ENCODE measurements at regions of chr5 and their contacts with region 1.

Region 1: DNA sequence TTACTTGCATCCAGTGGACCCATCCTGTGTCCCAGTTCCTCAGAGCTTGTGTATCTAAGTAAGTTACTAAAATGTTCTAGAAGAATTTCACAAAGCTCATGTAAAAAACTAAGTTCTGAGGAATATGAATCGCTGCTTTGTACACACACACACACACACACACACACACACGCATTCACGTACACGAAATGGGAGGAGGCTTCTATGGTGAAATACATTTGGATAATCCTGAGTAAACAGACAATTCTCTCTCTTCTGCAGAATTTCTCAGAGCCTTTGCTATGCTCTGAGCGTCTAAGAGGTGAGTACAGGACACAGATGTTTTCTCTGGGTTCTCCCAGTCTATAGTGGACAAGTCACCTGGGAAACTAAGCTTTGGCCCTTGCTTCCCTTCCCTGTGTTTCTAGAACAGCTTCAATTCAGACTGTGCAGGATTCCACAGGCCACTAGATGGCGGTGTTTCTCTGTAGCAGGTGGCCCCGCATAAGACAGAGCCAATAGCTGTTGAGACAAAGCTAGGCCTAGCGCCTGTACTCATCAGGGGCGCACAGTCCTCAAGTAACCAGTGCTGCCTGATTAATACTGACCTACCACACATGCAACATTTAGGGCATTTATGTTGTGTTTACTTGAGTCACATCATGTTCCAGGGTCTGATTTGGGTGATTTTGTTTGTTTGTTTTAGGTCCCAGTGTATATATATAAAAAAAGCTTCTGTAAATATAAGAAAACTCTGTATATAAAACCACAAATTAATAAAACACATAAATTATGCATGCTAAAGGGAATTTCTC is 114.8 kb downstream of the LIFR start:
- DNase-seq: peak; percentile 92
- H3K4me3 Mint-ChIP-seq: no peak overlapping the region
- H3K27ac Mint-ChIP-seq: no peak overlapping the region
- H3K4me1 Mint-ChIP-seq: no peaks in the 10 kb centered on the region
- H3K27me3 Mint-ChIP-seq: peaks cover 40% of the 10 kb centered on the region

Region 2: GRCh38 chr5:38420691-38421390 is 20.8 kb before region 1 on chr5:
- CTCF ChIA-PET with region 1: interaction called, 20 read pairs
- intact Hi-C with region 1: no loop called
- DNase-seq: peak; percentile 65
- H3K4me3 Mint-ChIP-seq: no peak overlapping the region
- H3K27ac Mint-ChIP-seq: no peak overlapping the region
- H3K4me1 Mint-ChIP-seq: no peaks in the 10 kb centered on the region
- H3K27me3 Mint-ChIP-seq: peaks cover 16% of the 10 kb centered on the region

Region 3: DNA sequence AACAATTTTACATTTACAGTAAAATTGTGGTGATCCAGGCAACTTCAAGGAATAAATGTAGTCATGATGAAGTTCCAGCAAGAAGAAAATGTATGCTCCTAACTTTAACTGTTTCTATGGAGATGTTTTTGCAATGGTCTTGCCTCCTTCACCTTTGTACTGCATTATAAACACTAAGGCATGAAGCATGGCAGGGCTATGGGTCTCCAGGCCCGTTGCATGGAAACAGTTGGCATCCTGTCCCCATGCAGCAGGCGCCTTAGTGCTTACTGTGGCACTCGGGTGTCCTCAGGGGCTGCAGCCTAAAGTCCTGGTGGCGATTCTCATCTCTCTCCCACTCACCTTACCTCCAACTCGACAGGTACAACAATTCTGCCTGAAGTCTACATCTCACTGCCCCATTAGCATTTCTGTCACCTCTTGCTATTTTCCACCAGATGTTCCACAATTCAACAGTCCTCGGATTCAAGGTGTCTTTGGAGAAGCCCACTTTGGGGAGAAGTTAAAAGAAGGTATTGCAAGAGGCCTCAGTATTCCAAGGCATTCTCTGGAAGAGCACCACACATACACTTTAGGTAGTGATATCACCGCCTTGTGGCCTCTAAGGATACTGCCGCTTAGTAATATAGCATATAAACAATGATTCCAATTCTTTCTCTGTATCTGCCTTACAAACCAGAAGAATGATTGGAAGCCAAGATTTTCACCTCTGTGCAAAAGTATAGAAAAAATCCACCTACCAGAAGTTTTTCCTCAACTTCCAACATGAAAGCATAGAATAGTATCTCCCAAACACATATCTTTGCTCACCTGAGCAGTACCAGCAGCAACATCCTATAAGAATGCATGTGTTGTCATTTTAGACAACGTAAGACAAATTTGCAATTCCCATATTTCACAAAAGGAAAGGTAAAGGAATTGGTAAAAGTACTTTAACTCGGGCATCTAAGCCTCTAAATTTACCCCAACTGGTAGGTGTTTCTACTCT is 109.7 kb after region 1 on chr5:
- CTCF ChIA-PET with region 1: interaction called, 14 read pairs
- intact Hi-C with region 1: loop called (anchors 1 kb)
- DNase-seq: peak; percentile 12
- H3K4me3 Mint-ChIP-seq: no peak overlapping the region
- H3K27ac Mint-ChIP-seq: no peak overlapping the region
- H3K4me1 Mint-ChIP-seq: peaks cover 4% of the 10 kb centered on the region
- H3K27me3 Mint-ChIP-seq: peaks cover 33% of the 10 kb centered on the region

Region 4: DNA sequence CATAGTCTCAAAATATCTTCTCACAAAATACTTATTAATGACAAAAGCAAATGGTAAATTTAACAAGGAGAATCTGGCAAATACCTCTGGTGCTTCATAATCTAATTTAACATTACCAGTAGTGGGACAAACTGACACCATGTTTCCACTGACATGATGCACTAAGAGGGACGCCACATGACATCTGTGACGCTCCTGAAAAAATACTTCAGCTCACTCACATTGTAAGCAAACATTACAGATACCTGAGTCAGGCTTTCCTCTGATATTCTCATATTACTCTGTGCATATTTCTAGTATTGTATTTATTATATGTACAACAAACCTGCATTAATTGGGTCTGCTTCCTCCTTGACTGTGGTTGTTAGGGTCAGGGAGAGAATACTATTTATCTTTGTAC is 347.5 kb after region 1 on chr5:
- CTCF ChIA-PET with region 1: no interaction called
- intact Hi-C with region 1: no loop called
- DNase-seq: no peak
- H3K4me3 Mint-ChIP-seq: no peak overlapping the region
- H3K27ac Mint-ChIP-seq: no peak overlapping the region
- H3K4me1 Mint-ChIP-seq: no peaks in the 10 kb centered on the region
- H3K27me3 Mint-ChIP-seq: peaks cover 18% of the 10 kb centered on the region

Region 5: DNA sequence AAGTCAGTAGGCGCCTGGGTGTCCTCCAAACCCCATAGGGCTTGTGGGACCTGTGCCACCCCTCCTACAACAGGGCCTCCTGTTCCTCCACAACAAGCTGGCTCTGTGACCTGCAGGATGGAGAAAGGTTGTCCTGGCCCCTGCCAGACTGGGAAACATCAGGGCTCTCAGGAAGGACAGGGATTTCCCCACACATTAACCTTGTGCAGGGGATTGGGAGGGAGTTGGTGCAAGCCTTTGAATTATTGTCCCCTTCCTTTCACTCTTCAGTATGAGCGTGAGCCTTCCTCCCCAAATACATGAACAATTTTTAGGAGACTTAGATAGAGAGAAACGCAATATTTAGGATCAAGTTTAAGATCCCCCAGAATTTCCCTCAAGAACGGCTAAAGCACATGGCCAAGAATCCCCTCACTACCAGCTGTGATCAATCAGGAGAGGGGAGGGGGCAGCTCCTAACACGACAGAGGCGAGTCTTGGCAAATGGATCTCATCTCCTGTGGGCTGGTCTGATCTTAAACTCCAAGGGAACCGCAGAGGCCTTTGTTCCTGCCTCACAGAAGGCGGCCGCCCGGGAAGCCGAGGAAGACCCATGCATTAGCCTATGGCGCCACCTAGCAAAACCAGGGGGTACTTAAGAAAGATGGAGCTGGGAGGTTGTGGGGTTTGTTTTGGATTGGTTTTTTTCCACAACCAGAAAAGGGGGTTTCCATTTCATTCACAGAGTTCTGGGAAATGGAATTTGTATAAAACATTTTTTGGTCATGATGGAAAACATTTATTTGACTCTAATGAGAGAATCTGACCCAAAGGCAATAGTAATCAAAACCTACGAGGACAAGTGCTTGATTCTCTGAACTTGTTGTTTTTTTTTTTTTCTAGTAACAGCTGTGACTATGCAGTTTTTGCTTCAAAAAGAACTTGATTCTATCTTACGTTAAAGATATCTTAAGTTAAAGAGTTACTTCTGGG is 368.0 kb after region 1 on chr5:
- CTCF ChIA-PET with region 1: interaction called, 122 read pairs
- intact Hi-C with region 1: loop called (anchors 1 kb)
- DNase-seq: peak; percentile 78
- H3K4me3 Mint-ChIP-seq: no peak overlapping the region
- H3K27ac Mint-ChIP-seq: no peak overlapping the region
- H3K4me1 Mint-ChIP-seq: peaks cover 12% of the 10 kb centered on the region
- H3K27me3 Mint-ChIP-seq: peaks cover 30% of the 10 kb centered on the region

Region 6: GRCh38 chr5:39080597-39081204 is 639.1 kb after region 1 on chr5:
- CTCF ChIA-PET with region 1: interaction called, 3 read pairs
- intact Hi-C with region 1: loop called (anchors 1 kb)
- DNase-seq: peak; percentile 50
- H3K4me3 Mint-ChIP-seq: no peak overlapping the region
- H3K27ac Mint-ChIP-seq: no peak overlapping the region
- H3K4me1 Mint-ChIP-seq: peaks cover 24% of the 10 kb centered on the region
- H3K27me3 Mint-ChIP-seq: peaks cover 34% of the 10 kb centered on the region

Region 7: GRCh38 chr5:39117401-39117800 is 675.8 kb after region 1 on chr5:
- CTCF ChIA-PET with region 1: no interaction called
- intact Hi-C with region 1: no loop called
- DNase-seq: no peak
- H3K4me3 Mint-ChIP-seq: no peak overlapping the region
- H3K27ac Mint-ChIP-seq: peak overlapping the region; percentile 77
- H3K4me1 Mint-ChIP-seq: peaks cover 46% of the 10 kb centered on the region
- H3K27me3 Mint-ChIP-seq: no peaks in the 10 kb centered on the region

Measured in activated naive CD4-positive, alpha-beta T cell treated with anti-CD3 and anti-CD28 coated beads for 36 hours (primary cell).